ENCODE measurements at regions of chr15 and their contacts with region 1.

Region 1: DNA sequence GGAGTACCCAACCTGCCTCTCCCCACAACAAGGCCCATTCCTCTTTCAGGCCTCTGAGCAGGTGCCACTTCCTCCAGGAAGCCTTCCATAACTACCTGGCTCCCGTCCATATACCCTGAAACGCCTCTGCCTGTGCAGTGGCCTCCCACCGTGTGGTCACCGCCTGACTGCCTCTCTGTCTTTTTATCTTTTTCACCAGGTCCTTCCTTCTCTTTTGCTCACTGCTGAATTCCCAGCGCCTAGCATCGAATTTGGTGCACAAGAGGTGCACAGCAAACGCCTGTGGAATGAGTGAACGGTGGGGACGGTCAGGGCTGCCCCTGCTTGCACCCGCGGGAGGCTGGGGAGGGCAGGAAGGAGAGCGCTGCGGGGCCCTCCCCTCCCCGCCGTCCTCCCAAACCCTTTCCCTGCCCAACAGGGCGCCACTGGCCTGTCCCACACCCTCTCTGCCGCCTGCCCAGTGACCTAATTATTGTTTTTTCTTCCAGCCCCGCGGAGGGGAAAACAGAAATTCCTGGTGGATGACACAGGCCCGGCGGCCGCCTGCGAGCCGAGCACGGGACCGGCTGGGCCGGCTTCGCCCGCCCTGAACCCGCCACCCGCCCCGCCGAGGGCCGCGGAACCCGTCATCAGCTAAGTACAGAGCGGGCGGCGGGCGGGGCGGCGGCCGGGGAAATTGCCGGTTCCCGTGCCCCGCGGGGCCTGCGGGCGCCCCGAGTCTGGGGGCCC is 140.1 kb downstream of the SMAD6 start:
- DNase-seq: no peak
- ATAC-seq: peak; percentile 36; the same call in 1 of the 3 replicates
- H3K4me3 ChIP-seq: no peak overlapping the region
- H3K27ac ChIP-seq: no peak overlapping the region
- H3K4me1 ChIP-seq: no peaks in the 10 kb centered on the region
- H3K27me3 ChIP-seq: peaks cover 7 to 18% of the 10 kb centered on the region in 2 experiments
- CTCF ChIP-seq: no peak
- EP300 ChIP-seq: no peak
- POLR2A ChIP-seq: no peak
- RAD21 ChIP-seq: no peak

Region 2: GRCh38 chr15:66603301-66604179 is 238.6 kb before region 1 on chr15:
- CTCF ChIA-PET with region 1: no interaction called
- POLR2A ChIA-PET with region 1: no interaction called
- RAD21 ChIA-PET with region 1: no interaction called
- SMC1A ChIA-PET with region 1: no interaction called
- in situ Hi-C with region 1: loop called (anchors 10 kb)
- intact Hi-C with region 1: no loop called
- DNase-seq: no peak
- ATAC-seq: peak; percentile 98
- H3K4me3 ChIP-seq: no peak overlapping the region
- H3K27ac ChIP-seq: no peak overlapping the region
- H3K4me1 ChIP-seq: no peaks in the 10 kb centered on the region
- H3K27me3 ChIP-seq: no peaks in the 10 kb centered on the region; a peak in 1 of 4 replicates
- CTCF ChIP-seq: peak; percentile 76 to 91 (median 86)
- EP300 ChIP-seq: no peak
- POLR2A ChIP-seq: no peak
- RAD21 ChIP-seq: peak; percentile 80

Region 3: DNA sequence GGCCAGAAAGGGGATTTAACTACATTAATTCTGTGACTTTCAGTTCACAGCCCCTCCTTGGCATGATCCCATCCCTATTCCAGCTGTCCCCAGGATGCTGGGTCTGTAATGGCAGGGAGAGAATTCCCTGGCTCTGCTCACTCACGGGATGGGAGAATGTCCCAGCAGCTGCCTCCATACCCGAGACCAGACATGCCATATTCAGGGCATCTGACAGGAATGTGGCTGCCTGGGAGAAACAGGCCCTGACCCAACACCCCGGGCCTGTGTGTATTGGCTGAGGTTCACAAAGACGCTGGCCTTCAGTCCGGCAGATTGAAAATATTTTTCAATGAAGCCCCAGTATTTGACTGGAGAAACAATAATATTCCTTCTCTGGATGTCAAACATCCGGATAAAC is 139.7 kb after region 1 on chr15:
- CTCF ChIA-PET with region 1: no interaction called
- POLR2A ChIA-PET with region 1: no interaction called
- RAD21 ChIA-PET with region 1: no interaction called
- SMC1A ChIA-PET with region 1: no interaction called
- in situ Hi-C with region 1: no loop called
- intact Hi-C with region 1: no loop called
- DNase-seq: no peak
- ATAC-seq: no peak
- H3K4me3 ChIP-seq: no peak overlapping the region
- H3K27ac ChIP-seq: no peak overlapping the region
- H3K4me1 ChIP-seq: no peaks in the 10 kb centered on the region
- H3K27me3 ChIP-seq: no peaks in the 10 kb centered on the region; a peak in 2 of 4 replicates
- CTCF ChIP-seq: no peak
- EP300 ChIP-seq: no peak
- POLR2A ChIP-seq: no peak
- RAD21 ChIP-seq: no peak

Measured in GM12878 (cell line).